Mammary epithelial cell (primary cell): ENCODE measurements at regions of chr17 and their contacts with region 1.

Region 1: GRCh38 chr17:7329374-7329996 is 350 bp upstream of the NEURL4 start:
- DNase-seq: peak; percentile 98
- H3K4me3 ChIP-seq: peak overlapping the region; percentile 74 to 97 (median 77)
- H3K27ac ChIP-seq: peak overlapping the region; percentile 80
- H3K4me1 ChIP-seq: peaks cover 15% of the 10 kb centered on the region
- H3K27me3 ChIP-seq: peaks cover 3% of the 10 kb centered on the region
- CTCF ChIP-seq: no peak

Region 2: GRCh38 chr17:7214300-7215135 is 115.0 kb before region 1 on chr17:
- CTCF ChIA-PET with region 1: interaction called, 15 read pairs
- dilution Hi-C with region 1: no loop called
- in situ Hi-C with region 1: no loop called
- intact Hi-C with region 1: no loop called
- DNase-seq: peak; percentile 95
- H3K4me3 ChIP-seq: peak overlapping the region; percentile 31 to 58 (median 39)
- H3K27ac ChIP-seq: peak overlapping the region; percentile 66
- H3K4me1 ChIP-seq: peaks cover 10% of the 10 kb centered on the region
- H3K27me3 ChIP-seq: no peaks in the 10 kb centered on the region
- CTCF ChIP-seq: peak; percentile 45 to 74

Region 3: GRCh38 chr17:7225711-7226361 is 103.6 kb before region 1 on chr17:
- CTCF ChIA-PET with region 1: no interaction called
- dilution Hi-C with region 1: loop called (anchors 5 kb)
- in situ Hi-C with region 1: no loop called
- intact Hi-C with region 1: no loop called
- DNase-seq: no peak
- H3K4me3 ChIP-seq: no peak overlapping the region
- H3K27ac ChIP-seq: no peak overlapping the region
- H3K4me1 ChIP-seq: peaks cover 28% of the 10 kb centered on the region
- H3K27me3 ChIP-seq: no peaks in the 10 kb centered on the region
- CTCF ChIP-seq: no peak

Region 4: DNA sequence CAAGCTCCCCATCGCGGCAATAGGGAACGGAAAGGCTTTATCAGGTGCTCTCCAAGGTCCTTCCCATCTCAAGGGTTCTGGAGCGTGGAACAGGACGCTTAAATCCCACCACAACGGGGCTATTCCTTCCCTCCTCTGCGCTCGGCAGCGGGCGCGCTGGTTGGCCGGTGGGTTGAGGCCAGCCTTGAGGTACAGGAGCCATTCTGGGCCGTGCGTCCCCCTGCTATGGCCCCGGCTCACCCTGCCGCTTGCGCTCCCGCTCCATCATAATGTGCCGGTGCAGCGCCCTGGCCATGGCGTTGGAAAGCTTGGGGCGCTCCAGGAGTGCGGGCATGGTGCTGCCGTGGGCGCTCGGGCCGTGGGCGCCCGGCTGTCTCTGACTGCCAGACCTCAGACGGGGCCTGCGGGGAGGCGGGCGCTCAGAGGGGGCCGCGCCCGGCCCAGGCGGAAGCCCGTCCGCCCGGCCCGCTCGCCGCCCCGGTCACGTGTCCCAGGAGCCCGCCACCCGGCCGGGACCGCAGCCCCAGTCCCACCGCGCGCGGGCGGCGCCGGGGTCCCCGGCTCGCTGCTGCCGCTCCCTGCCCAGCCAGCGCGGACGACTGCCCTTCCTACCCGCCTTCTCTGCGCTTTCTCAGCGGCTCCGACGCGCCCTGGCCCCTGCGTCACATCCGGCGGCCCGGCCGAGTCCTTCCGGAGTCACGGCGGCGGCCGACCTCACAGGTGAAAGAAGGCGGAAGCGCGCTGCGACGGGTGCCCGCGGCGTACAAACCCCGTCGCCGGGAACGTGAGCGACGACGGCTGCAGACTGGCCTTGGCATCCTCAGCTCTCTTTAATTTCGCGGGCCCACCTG is 14.5 kb before region 1 on chr17 and contains the start of gene GPS2:
- CTCF ChIA-PET with region 1: no interaction called
- dilution Hi-C with region 1: no loop called
- in situ Hi-C with region 1: no loop called
- intact Hi-C with region 1: no loop called
- DNase-seq: peak; percentile 87
- H3K4me3 ChIP-seq: peak within 1 kb of the TSS; percentile 74 to 87 (median 79)
- H3K27ac ChIP-seq: peak within 1 kb of the TSS; percentile 36
- H3K4me1 ChIP-seq: peaks cover 35% of the 10 kb centered on the region
- H3K27me3 ChIP-seq: no peaks in the 10 kb centered on the region
- CTCF ChIP-seq: no peak
- total RNA-seq, gene GPS2: 29.7 to 40.5 TPM

Region 5: DNA sequence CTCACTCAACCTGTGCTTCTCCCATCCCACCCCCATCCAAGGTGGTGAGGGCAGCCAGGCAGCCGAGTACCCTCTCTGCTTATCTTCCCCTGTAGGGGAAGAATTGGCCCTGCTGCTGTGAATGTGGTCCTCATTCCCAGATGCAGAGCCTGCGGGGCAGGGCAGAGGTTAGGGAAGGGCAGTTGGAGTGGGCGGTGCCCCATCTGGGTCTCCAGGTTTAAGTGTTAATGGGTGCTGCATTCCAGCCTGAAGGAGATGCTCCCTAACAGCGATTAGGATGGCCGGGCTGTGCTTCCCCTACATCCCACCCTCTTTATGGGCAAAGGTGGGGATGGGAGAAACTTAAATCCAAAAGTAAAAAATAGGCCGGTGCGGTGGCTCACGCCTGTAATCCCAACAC is 37.6 kb after region 1 on chr17:
- CTCF ChIA-PET with region 1: no interaction called
- dilution Hi-C with region 1: no loop called
- in situ Hi-C with region 1: no loop called
- intact Hi-C with region 1: no loop called
- DNase-seq: no peak
- H3K4me3 ChIP-seq: no peak overlapping the region
- H3K27ac ChIP-seq: no peak overlapping the region
- H3K4me1 ChIP-seq: peaks cover 13% of the 10 kb centered on the region
- H3K27me3 ChIP-seq: no peaks in the 10 kb centered on the region
- CTCF ChIP-seq: no peak

Region 6: GRCh38 chr17:7380855-7381742 is 51.6 kb after region 1 on chr17 and contains the start of gene TNK1:
- CTCF ChIA-PET with region 1: no interaction called
- dilution Hi-C with region 1: loop called (anchors 5 kb)
- in situ Hi-C with region 1: no loop called
- intact Hi-C with region 1: no loop called
- DNase-seq: peak; percentile 66
- H3K4me3 ChIP-seq: peak within 1 kb of the TSS; percentile 57 to 60 (median 57)
- H3K27ac ChIP-seq: peak within 1 kb of the TSS; percentile 50
- H3K4me1 ChIP-seq: peaks cover 7% of the 10 kb centered on the region
- H3K27me3 ChIP-seq: no peaks in the 10 kb centered on the region
- CTCF ChIP-seq: no peak
- total RNA-seq, gene TNK1: 13.3 to 15.9 TPM

Region 7: GRCh38 chr17:7403977-7404736 is 74.7 kb after region 1 on chr17 and contains the start of gene TMEM256:
- CTCF ChIA-PET with region 1: interaction called, 11 read pairs
- dilution Hi-C with region 1: no loop called
- in situ Hi-C with region 1: no loop called
- intact Hi-C with region 1: no loop called
- DNase-seq: peak; percentile 99
- H3K4me3 ChIP-seq: peak within 1 kb of the TSS; percentile 66 to 86 (median 70)
- H3K27ac ChIP-seq: peak within 1 kb of the TSS; percentile 42
- H3K4me1 ChIP-seq: peaks cover 7% of the 10 kb centered on the region
- H3K27me3 ChIP-seq: no peaks in the 10 kb centered on the region
- CTCF ChIP-seq: no peak
- total RNA-seq, gene TMEM256: 43.8 to 70.8 TPM

Region 8: GRCh38 chr17:7426896-7427489 is 97.5 kb after region 1 on chr17:
- CTCF ChIA-PET with region 1: no interaction called
- dilution Hi-C with region 1: no loop called
- in situ Hi-C with region 1: no loop called
- intact Hi-C with region 1: no loop called
- DNase-seq: no peak
- H3K4me3 ChIP-seq: no peak overlapping the region
- H3K27ac ChIP-seq: no peak overlapping the region
- H3K4me1 ChIP-seq: no peaks in the 10 kb centered on the region
- H3K27me3 ChIP-seq: no peaks in the 10 kb centered on the region
- CTCF ChIP-seq: no peak

Region 9: DNA sequence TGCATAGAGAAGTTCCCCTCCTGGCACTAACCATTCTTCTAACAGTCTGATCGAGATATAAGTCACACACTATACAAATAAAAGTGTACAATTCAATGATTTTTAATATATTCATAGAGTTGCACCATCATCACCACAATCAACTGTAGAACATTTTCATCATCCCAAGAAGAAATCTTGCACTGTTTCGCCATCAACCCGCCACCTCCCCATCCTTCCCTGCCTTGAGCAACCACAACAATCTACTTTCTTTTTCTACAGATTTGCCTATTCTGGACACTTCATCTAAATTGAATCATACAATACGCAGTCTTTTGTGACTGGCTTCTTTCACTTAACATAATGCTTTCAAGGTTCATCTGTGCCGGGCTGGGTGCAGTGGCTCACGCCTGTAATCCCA is 639.9 kb after region 1 on chr17:
- CTCF ChIA-PET with region 1: no interaction called
- dilution Hi-C with region 1: no loop called
- in situ Hi-C with region 1: no loop called
- intact Hi-C with region 1: no loop called
- DNase-seq: no peak
- H3K4me3 ChIP-seq: no peak overlapping the region
- H3K27ac ChIP-seq: no peak overlapping the region
- H3K4me1 ChIP-seq: no peaks in the 10 kb centered on the region
- H3K27me3 ChIP-seq: no peaks in the 10 kb centered on the region
- CTCF ChIP-seq: no peak